ENCODE measurements at regions of chr3 and their contacts with region 1.

Region 1: DNA sequence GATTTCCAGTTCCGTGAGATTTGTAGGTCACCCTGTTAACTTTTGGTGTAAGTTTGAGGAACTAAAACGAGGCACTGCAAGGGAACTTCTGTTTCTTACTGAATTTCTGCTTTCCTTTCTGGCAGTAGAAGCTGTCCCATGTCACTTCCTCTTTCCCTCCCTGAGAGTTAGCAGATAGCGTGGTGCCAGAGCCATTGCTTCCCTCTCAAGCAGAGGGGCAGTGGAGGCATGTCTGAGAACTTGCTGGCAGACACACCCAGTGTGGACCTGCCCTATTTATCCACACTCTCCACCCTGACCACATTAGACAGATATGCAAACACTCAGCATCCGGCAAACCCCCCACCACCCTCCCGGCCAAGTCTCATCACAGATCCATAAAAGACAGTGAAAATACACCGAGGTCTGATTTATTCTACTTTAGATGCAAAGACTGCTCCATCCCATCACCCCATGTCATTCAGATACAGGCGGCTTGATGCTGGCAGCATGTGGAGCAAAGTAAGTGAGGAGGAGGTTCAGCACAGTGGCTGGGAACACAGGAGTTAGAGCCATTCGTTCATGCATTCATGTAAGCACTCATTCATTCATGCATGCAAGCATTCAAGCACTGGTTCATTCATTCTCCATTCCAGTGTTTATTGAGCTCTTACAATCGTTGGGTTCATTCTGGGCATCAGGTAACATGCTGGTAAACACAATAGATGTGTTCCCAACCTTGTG is 324.7 kb downstream of the SHQ1 start:
- DNase-seq: no peak
- H3K4me3 Mint-ChIP-seq: no peak overlapping the region
- H3K27ac Mint-ChIP-seq: peak overlapping the region; percentile 91
- H3K4me1 Mint-ChIP-seq: peaks cover 36% of the 10 kb centered on the region
- H3K27me3 Mint-ChIP-seq: no peaks in the 10 kb centered on the region

Region 2: GRCh38 chr3:72538070-72538745 is 14.6 kb after region 1 on chr3:
- intact Hi-C with region 1: loop called (anchors 2 kb)
- DNase-seq: no peak
- H3K4me3 Mint-ChIP-seq: no peak overlapping the region
- H3K27ac Mint-ChIP-seq: peak overlapping the region; percentile 75
- H3K4me1 Mint-ChIP-seq: peaks cover 32% of the 10 kb centered on the region
- H3K27me3 Mint-ChIP-seq: no peaks in the 10 kb centered on the region

Region 3: DNA sequence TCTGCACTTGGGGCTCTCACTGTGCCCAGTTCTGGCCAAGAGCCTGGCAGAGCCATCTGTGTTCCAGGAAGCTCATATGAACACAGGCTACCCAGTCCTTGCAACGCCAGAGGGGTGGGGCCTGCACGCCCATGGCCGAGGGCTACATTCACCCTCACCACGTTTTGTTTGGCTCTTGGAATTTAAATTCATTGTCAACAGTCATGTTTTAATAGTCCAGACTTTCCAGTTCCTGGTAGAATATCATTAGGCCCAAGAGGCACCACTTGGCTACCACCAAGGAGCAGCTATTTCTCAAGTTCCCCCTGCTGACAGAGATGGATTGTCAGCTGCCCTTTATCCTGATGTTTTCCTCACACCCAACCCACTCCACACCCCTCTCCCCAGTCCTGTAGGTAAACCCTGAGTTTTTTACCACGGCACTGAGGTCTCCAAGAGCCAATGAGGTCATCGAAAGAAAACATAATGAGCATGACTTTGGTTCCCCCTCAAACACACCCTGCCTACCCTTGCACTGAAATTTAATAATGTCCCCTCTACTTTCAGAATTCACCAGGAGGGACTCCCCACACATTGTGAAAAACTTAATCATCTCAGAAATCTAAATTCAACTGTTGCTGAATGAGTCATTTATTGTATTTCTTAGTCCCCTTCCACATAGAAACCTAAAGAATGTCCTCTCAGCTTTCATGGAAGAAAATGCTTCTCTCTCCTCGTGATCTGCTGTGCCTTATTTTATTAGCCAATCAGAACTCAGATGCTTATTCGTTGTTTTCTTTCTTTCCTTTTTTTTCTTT is 199.5 kb after region 1 on chr3:
- intact Hi-C with region 1: loop called (anchors 5 kb)
- DNase-seq: no peak
- H3K4me3 Mint-ChIP-seq: no peak overlapping the region
- H3K27ac Mint-ChIP-seq: peak overlapping the region; percentile 70
- H3K4me1 Mint-ChIP-seq: peaks cover 9% of the 10 kb centered on the region
- H3K27me3 Mint-ChIP-seq: no peaks in the 10 kb centered on the region

Measured in activated CD4-positive, alpha-beta T cell treated with anti-CD3 and anti-CD28 coated beads, Interleukin-2, amount 10 ng/mL, durations not matched to agents 24 days and 14 days (primary cell).